Heart left ventricle (tissue), 16 donors: ENCODE measurements at regions of chr13 and their contacts with region 1.

Region 1: DNA sequence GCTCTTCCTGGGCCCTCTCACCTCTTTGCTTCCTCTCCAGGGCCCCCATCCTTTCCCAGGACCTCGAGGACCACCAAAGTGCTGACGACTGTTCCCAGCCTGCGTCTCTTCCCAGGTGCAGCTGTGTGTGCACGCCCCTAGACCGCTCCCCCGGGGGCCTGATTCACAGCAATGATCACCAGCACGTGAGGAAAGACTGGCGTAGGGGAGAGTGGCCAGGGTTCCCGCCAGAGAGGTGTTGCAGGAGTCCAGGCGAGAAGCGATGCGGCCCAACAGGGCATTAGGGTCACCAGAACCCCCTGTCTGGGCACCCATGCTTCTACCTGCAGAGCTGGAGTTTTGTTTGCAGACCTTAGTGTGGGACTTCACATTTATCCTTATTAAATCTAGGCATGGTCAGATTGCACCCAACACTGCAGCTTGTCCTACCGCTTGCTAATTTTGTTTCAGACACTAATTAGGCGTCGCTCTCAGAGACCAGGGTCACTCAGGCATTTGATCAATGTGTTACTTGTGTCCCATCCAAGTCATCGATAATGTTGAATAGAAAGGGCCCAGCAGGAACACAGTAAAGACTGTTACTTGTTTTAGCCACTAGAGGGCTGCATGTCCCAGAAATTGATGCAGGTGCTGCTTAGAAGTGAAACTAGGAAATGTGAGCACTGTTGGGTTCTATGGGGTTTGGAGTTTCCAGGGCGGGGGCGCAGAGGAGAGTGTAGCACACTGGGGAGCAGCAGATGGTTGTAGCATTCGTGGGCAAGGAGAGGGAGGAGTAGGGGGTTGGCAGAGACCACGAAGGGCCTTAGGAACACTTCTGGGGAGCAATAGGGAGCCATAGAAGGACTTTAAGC is 53.2 kb downstream of the CDADC1 start:
- DNase-seq: peak; percentile 40 to 65 (median 57)
- ATAC-seq: peak; percentile 54 to 77 (median 72)
- H3K4me3 ChIP-seq: peak overlapping the region in 9 of 12 donors; percentile 27 to 44 (median 33)
- H3K27ac ChIP-seq: peak overlapping the region in 3 of 12 donors; percentile 15 to 60 (median 24)
- H3K4me1 ChIP-seq: peaks cover 0 to 28% (median 13%) of the 10 kb centered on the region in 12 donors
- H3K27me3 ChIP-seq: no peaks in the 10 kb centered on the region
- CTCF ChIP-seq: peak; percentile 75 to 91 (median 86)
- POLR2A ChIP-seq: no peak

Region 2: GRCh38 chr13:49436890-49437289 is 135.9 kb after region 1 on chr13:
- intact Hi-C with region 1: loop called in 9 of 10 experiments (anchors 2 to 10 kb)
- DNase-seq: peak in 3 of 5 donors; percentile 20 to 42 (median 42)
- ATAC-seq: peak; percentile 44 to 76 (median 67)
- H3K4me3 ChIP-seq: no peak overlapping the region
- H3K27ac ChIP-seq: peak overlapping the region in 1 of 12 donors; percentile 34
- H3K4me1 ChIP-seq: no peaks in the 10 kb centered on the region
- H3K27me3 ChIP-seq: no peaks in the 10 kb centered on the region
- CTCF ChIP-seq: peak in 6 of 12 donors; percentile 20 to 40 (median 31)
- POLR2A ChIP-seq: no peak

Region 3: GRCh38 chr13:49443704-49444523 is 142.9 kb after region 1 on chr13 and contains the starts of genes CAB39L and SETDB2:
- intact Hi-C with region 1: loop called in 8 of 10 experiments (anchors 2 to 10 kb)
- DNase-seq: peak; percentile 99 to 100 (median 99)
- ATAC-seq: peak; percentile 98 to 99 (median 99)
- H3K4me3 ChIP-seq: peak within 1 kb of the TSS; percentile 40 to 88 (median 82)
- H3K27ac ChIP-seq: peak within 1 kb of the TSS; percentile 81 to 99 (median 92)
- H3K4me1 ChIP-seq: peaks cover 0 to 47% (median 16%) of the 10 kb centered on the region in 12 donors
- H3K27me3 ChIP-seq: no peaks in the 10 kb centered on the region
- CTCF ChIP-seq: peak in 11 of 12 donors; percentile 10 to 70 (median 37)
- POLR2A ChIP-seq: peak in 1 of 2 donors; percentile 83
- total RNA-seq, gene CAB39L: 10.2 to 27.4 (median 19.0) TPM
- total RNA-seq, gene SETDB2: 7.9 to 19.8 (median 13.5) TPM

Region 4: GRCh38 chr13:49495783-49496762 is 195.1 kb after region 1 on chr13 and contains the start of gene PHF11:
- intact Hi-C with region 1: loop called in 1 of 10 experiments (anchors 5 kb)
- DNase-seq: peak; percentile 82 to 91 (median 88)
- ATAC-seq: peak; percentile 71 to 92 (median 90)
- H3K4me3 ChIP-seq: peak within 1 kb of the TSS; percentile 56 to 86 (median 70)
- H3K27ac ChIP-seq: peak within 1 kb of the TSS; percentile 83 to 99 (median 95)
- H3K4me1 ChIP-seq: peaks cover 0 to 39% (median 8%) of the 10 kb centered on the region in 12 donors
- H3K27me3 ChIP-seq: no peaks in the 10 kb centered on the region
- CTCF ChIP-seq: peak in 9 of 12 donors; percentile 10 to 37 (median 23)
- POLR2A ChIP-seq: peak in 1 of 2 donors; percentile 43
- total RNA-seq, gene PHF11: 13.7 to 48.5 (median 16.5) TPM

Region 5: DNA sequence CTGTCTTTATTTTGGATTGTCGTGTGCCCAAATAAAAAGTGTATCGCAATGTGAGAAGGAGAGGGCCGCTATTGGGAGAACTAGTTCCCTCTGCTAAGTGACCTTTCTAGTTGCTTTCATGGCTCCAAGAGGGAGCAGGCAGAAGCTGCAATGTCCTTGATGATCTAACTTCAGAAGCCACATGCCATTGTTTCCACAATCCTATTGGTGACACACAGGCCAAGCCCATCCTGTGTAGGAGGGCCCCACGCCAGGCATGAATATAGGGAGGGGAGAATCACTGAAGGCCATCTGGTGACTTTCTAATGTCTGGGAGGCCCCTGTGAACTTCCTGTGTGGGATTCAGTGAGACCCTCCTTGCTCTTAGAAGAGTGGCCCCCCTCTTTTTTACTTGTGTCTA is 539.3 kb after region 1 on chr13:
- intact Hi-C with region 1: loop called in 3 of 10 experiments (anchors 5 to 10 kb)
- DNase-seq: no peak
- ATAC-seq: peak in 3 of 4 donors; percentile 32 to 42 (median 36)
- H3K4me3 ChIP-seq: no peak overlapping the region
- H3K27ac ChIP-seq: no peak overlapping the region
- H3K4me1 ChIP-seq: no peaks in the 10 kb centered on the region
- H3K27me3 ChIP-seq: no peaks in the 10 kb centered on the region
- CTCF ChIP-seq: no peak
- POLR2A ChIP-seq: no peak